ENCODE measurements at regions of chr3 and their contacts with region 1.

Region 1: GRCh38 chr3:18787441-18787840 is 360.9 kb upstream of the KCNH8 start:
- DNase-seq: no peak
- ATAC-seq: peak; percentile 29
- H3K4me3 Mint-ChIP-seq: no peak overlapping the region
- H3K27ac Mint-ChIP-seq: no peak overlapping the region
- H3K4me1 Mint-ChIP-seq: peaks cover 2% of the 10 kb centered on the region
- H3K27me3 Mint-ChIP-seq: no peaks in the 10 kb centered on the region
- CTCF ChIP-seq: no peak

Region 2: GRCh38 chr3:18575573-18575972 is 211.9 kb before region 1 on chr3:
- CTCF ChIA-PET with region 1: no interaction called
- POLR2A ChIA-PET with region 1: no interaction called
- intact Hi-C with region 1: no loop called
- DNase-seq: no peak
- ATAC-seq: no peak
- H3K4me3 Mint-ChIP-seq: no peak overlapping the region
- H3K27ac Mint-ChIP-seq: no peak overlapping the region
- H3K4me1 Mint-ChIP-seq: peaks cover 9% of the 10 kb centered on the region
- H3K27me3 Mint-ChIP-seq: no peaks in the 10 kb centered on the region
- CTCF ChIP-seq: no peak

Region 3: DNA sequence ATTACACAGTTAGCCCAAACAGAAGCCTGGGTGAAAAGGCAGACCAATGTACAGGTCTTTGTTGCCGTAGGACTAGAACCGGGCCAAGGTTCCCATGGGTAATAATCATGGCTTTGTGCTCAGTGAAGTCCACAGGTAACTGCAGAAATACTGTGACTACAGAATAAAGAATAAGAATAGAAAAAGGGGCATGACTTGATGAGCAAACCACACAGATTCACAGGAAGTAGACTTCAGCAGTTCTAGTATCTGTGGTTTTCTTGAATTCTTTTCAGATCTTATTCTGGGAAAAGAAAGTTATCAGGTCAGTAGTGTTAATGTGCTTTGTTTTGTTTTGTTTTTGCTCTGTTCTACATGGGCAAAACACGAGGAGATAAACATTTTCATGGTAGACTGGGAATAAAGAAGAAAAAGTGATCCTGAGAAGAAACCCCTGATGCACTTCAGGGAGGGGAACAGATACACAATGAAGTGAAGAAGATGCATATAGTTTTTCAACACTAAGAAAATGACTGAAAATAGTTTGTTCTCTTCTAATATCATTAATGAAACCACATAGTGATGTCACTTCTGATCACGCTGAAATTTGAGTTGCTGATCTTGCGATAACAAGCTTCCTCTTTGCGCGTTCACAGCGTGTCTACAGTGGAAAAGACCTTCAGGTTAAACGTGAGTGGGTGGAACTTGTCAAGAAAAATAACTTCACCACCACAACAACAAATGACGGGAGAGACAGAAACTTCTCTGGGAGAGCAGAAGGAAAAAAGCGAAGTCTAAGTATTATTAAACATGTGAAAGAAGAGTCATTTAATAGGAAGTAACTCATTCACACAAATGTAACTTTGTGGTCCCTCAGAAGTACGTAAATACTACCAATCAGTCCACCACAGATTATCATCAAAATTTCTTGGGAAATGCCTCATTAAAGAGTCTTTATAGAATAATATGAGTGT is 46.5 kb before region 1 on chr3:
- CTCF ChIA-PET with region 1: no interaction called
- POLR2A ChIA-PET with region 1: no interaction called
- intact Hi-C with region 1: no loop called
- DNase-seq: peak; percentile 79
- ATAC-seq: peak; percentile 45
- H3K4me3 Mint-ChIP-seq: peak overlapping the region; percentile 58
- H3K27ac Mint-ChIP-seq: peak overlapping the region; percentile 92
- H3K4me1 Mint-ChIP-seq: peaks cover 90% of the 10 kb centered on the region
- H3K27me3 Mint-ChIP-seq: no peaks in the 10 kb centered on the region
- CTCF ChIP-seq: no peak

Region 4: GRCh38 chr3:18766974-18767373 is 20.5 kb before region 1 on chr3:
- CTCF ChIA-PET with region 1: no interaction called
- POLR2A ChIA-PET with region 1: no interaction called
- intact Hi-C with region 1: no loop called
- DNase-seq: no peak
- ATAC-seq: no peak
- H3K4me3 Mint-ChIP-seq: no peak overlapping the region
- H3K27ac Mint-ChIP-seq: no peak overlapping the region
- H3K4me1 Mint-ChIP-seq: peaks cover 20% of the 10 kb centered on the region
- H3K27me3 Mint-ChIP-seq: no peaks in the 10 kb centered on the region
- CTCF ChIP-seq: no peak

Region 5: DNA sequence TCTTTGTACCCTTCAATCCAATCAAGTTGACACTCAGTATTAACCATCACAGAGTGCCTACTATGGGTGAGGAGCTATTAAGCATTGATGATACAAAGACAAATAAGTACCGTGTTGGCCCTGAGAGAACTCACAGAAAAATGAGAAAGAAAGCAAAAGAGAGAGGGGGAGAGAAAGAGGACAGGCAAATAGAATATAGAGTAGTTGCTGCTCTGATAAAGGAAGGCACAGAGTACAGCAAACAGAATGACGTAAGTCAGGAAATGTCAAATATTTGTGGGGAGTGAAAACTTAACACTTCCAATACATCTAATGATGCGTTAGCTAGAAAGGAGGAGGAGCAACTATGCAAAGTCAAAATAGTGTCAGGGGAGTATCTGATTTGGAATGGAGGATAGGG is 40.2 kb after region 1 on chr3:
- CTCF ChIA-PET with region 1: no interaction called
- POLR2A ChIA-PET with region 1: interaction called, 6 read pairs
- intact Hi-C with region 1: loop called (anchors 2 kb)
- DNase-seq: no peak
- ATAC-seq: peak; percentile 24
- H3K4me3 Mint-ChIP-seq: no peak overlapping the region
- H3K27ac Mint-ChIP-seq: no peak overlapping the region
- H3K4me1 Mint-ChIP-seq: peaks cover 18% of the 10 kb centered on the region
- H3K27me3 Mint-ChIP-seq: no peaks in the 10 kb centered on the region
- CTCF ChIP-seq: no peak

Measured in activated CD8-positive, alpha-beta T cell treated with anti-CD3 and anti-CD28 coated beads for 36 hours (primary cell).